CD8-positive, alpha-beta T cell (primary cell): ENCODE measurements at regions of chr19 and their contacts with region 1.

Region 1: DNA sequence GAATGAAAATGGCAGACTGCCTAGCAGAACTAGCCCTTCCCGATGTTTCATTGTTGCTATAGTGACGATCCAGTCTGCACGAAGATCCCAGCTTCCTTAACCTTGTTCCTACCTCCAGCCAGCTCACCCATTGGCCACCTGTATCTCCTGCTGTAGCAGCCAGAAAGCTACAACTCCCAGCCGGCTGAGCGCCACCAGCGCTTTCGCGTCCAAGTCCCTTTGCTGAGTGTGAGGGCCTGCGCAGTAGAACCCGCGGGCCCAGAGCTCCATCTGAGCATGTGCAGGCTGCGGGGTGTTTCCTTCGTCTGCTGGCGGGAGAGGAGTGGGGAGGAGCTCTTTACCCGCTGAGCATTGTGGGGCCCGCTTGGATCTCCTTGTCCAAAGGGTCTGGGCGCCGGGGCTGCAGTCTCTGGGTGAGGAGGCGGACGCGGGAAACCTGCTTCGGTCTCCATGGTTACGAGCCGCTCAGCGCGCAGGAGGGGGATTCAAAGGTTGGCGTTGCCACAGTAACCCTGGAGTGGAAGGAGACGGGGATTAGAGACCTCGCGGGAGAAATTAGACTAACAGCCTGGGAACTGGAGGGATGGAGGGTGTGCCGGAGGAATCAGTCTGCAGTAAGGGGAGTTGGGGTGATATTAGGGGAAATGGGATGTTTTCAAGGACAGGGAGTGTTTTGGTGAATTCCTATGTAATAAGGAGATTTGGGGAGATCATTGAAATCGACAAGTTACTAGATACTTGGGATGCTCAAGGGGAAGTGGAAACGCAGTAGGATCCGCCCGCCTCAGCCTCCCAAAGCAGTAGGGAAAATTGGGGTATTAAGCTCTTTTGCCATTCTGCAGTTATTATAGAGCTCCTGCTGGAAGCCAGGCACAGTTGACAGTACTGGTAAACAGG is 33.5 kb downstream of the ZSWIM9 start:
- DNase-seq: peak; percentile 78 to 95 (median 90)
- ATAC-seq: peak; percentile 100
- H3K4me3 ChIP-seq: peak overlapping the region; percentile 81 to 83
- H3K4me3 Mint-ChIP-seq: no peak overlapping the region
- H3K27ac ChIP-seq: peak overlapping the region; percentile 61 to 72
- H3K27ac Mint-ChIP-seq: no peak overlapping the region
- H3K4me1 ChIP-seq: peaks cover 16% of the 10 kb centered on the region
- H3K4me1 Mint-ChIP-seq: peaks cover 26% of the 10 kb centered on the region
- H3K27me3 ChIP-seq: no peaks in the 10 kb centered on the region
- H3K27me3 Mint-ChIP-seq: no peaks in the 10 kb centered on the region
- CTCF ChIP-seq: no peak

Region 2: DNA sequence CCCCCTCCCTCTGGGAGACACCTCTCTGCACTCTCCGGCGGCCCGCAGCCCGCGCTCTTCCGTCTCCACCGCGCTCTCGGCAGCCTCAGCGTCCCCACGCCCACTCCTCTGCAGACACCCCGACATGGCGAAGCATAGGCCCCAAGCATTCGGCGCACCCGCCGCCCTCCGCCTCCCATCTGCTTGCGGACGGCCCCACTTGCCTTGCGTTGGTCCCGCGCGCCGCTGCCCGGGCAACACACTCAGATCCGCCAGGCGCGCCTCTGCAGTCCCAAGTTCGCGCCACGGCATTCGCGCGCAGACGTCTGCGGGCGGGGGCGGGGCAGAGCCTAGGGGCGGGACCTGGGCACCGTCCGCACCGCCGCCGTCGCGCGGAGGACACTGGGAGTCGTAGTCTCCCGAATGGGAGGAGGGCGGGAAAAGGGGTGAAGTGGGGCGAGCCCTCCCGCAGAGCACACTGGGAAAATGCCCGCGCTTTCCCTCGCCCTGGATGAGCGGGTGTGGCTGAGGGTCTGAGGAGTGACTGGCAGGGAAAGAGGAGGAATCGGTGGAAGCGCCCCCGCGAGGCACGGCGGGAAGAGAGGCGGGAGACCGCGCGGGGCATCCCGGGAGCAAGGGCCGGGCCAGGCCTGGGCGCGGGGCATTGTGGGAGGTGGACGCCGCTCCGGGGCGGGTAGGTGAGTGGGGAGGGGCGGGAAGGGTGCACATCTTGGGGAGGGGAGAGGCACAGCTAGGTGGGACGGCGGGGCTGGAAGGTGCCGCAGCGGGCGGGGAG is 33.8 kb before region 1 on chr19 and contains the starts of genes LIG1 and ZSWIM9:
- CTCF ChIA-PET with region 1: interaction called, 3 read pairs
- POLR2A ChIA-PET with region 1: interaction called, 4 read pairs
- intact Hi-C with region 1: loop called (anchors 1 kb)
- DNase-seq: peak; percentile 82 to 95 (median 90)
- ATAC-seq: peak; percentile 81
- H3K4me3 ChIP-seq: peak within 1 kb of the TSS; percentile 96 to 100
- H3K4me3 Mint-ChIP-seq: peak within 1 kb of the TSS; percentile 98
- H3K27ac ChIP-seq: peak within 1 kb of the TSS; percentile 82 to 92
- H3K27ac Mint-ChIP-seq: peak within 1 kb of the TSS; percentile 97
- H3K4me1 ChIP-seq: peaks cover 7% of the 10 kb centered on the region
- H3K4me1 Mint-ChIP-seq: peaks cover 22% of the 10 kb centered on the region
- H3K27me3 ChIP-seq: no peaks in the 10 kb centered on the region
- H3K27me3 Mint-ChIP-seq: no peaks in the 10 kb centered on the region
- CTCF ChIP-seq: peak; percentile 25
- total RNA-seq, gene LIG1: 62.5 to 67.5 TPM
- total RNA-seq, gene ZSWIM9: 2.5 to 4.5 TPM

Region 3: DNA sequence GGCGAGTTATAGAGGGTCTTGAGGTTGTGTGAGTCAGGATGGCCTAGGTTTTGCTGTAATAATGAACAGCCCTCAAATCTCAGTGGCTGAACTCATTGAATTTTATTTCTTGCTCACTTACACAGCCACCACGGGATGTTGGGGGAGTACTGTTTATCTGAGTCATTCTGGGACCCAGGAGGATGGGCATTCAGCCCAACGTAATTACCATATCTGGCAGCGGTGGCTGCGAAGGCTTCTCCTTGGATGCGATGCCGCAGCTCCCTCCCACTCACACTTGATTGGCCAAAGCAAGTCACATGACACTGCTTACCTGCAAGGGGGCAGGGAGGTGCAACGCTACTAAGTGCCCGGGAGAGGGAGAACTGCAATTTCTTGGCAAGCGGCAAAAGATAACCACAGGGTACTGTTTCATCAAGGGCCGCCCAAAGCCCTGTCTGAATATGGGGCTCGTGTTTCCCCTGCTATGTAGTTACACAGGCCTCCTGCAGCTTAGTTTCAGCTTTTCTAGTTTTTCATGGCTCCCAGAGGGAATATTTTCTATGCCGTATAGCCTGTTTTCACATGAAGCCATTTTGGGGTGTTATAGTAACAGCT is 13.6 kb before region 1 on chr19:
- CTCF ChIA-PET with region 1: interaction called, 25 read pairs
- POLR2A ChIA-PET with region 1: interaction called, 8 read pairs
- intact Hi-C with region 1: no loop called
- DNase-seq: peak in 7 of 9 experiments; percentile 16 to 84 (median 68)
- ATAC-seq: peak; percentile 94
- H3K4me3 ChIP-seq: no peak overlapping the region
- H3K4me3 Mint-ChIP-seq: no peak overlapping the region
- H3K27ac ChIP-seq: no peak overlapping the region
- H3K27ac Mint-ChIP-seq: peak overlapping the region; percentile 64
- H3K4me1 ChIP-seq: no peaks in the 10 kb centered on the region
- H3K4me1 Mint-ChIP-seq: peaks cover 12% of the 10 kb centered on the region
- H3K27me3 ChIP-seq: no peaks in the 10 kb centered on the region
- H3K27me3 Mint-ChIP-seq: no peaks in the 10 kb centered on the region
- CTCF ChIP-seq: no peak

Region 4: GRCh38 chr19:48244281-48244680 is 40.3 kb after region 1 on chr19:
- CTCF ChIA-PET with region 1: interaction called, 6 read pairs
- POLR2A ChIA-PET with region 1: interaction called, 9 read pairs
- intact Hi-C with region 1: loop called in 1 of 2 experiments (anchors 2 kb)
- DNase-seq: peak in 8 of 9 experiments; percentile 21 to 78 (median 47)
- ATAC-seq: peak; percentile 93
- H3K4me3 ChIP-seq: peak overlapping the region; percentile 20 to 40
- H3K4me3 Mint-ChIP-seq: peak overlapping the region; percentile 71
- H3K27ac ChIP-seq: peak overlapping the region; percentile 37 to 81
- H3K27ac Mint-ChIP-seq: peak overlapping the region; percentile 92
- H3K4me1 ChIP-seq: peaks cover 43% of the 10 kb centered on the region
- H3K4me1 Mint-ChIP-seq: peaks cover 53% of the 10 kb centered on the region
- H3K27me3 ChIP-seq: no peaks in the 10 kb centered on the region
- H3K27me3 Mint-ChIP-seq: no peaks in the 10 kb centered on the region
- CTCF ChIP-seq: no peak

Region 5: DNA sequence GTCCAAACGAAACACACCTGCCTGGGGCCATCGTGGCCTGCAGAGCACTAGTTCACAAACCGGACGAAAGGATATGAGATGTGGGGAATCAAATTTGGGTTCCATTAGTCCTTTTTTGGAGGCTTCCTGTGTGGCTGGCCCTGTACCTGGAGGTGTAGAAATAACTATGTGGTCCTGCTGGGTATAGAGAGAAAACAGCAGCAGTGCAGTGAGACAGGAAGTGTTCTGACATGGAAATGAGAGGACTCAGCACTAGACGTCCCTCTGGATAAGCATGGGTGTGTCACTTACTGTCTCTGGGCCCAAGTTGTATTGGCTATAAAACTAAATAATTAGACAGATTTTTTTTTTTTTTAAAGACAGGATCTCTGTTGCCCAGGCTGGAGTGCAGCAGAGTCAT is 175.1 kb after region 1 on chr19:
- CTCF ChIA-PET with region 1: no interaction called
- POLR2A ChIA-PET with region 1: no interaction called
- intact Hi-C with region 1: no loop called
- DNase-seq: no peak
- ATAC-seq: no peak
- H3K4me3 ChIP-seq: no peak overlapping the region
- H3K4me3 Mint-ChIP-seq: no peak overlapping the region
- H3K27ac ChIP-seq: no peak overlapping the region
- H3K27ac Mint-ChIP-seq: no peak overlapping the region
- H3K4me1 ChIP-seq: no peaks in the 10 kb centered on the region
- H3K4me1 Mint-ChIP-seq: no peaks in the 10 kb centered on the region
- H3K27me3 ChIP-seq: no peaks in the 10 kb centered on the region
- H3K27me3 Mint-ChIP-seq: no peaks in the 10 kb centered on the region
- CTCF ChIP-seq: no peak